MCF 10A (cell line): ENCODE measurements at regions of chr11 and their contacts with region 1.

Region 1: DNA sequence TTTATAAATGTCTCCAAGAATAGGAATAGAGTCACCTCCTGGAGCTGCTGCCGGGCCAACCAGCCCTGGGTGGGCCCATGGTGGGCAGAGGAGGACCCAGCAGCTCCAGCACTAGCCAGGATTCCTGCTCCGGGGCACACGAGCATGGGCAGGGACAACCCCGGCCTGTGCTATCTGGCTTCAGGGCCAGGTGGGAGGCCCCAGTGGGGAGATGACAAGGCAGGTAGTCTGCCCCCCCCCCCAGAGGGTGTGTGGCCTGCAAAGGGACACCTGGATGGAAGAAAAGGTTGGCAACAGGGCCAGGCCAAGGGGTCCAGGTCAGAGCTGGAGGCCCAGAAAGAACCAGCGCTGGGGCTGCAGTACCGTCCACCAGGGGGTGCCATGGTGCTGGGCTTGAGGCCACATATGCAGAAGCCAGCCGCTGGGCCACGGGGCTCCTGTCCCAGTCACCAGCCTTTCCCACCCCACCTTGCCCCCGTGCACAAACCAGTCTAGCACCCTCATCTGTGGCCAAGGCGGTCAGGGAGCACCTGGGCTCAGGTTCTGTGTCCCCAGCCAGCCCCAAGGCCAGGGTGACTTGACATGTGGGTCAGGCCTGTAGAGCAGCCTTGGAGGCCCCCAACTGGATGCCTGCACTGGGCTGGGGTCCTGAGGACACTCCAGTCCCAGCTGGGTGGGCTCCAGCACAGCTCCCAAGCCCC is 3.5 kb downstream of the TSPAN32 start:
- DNase-seq: peak; percentile 67
- H3K4me3 Mint-ChIP-seq: no peak overlapping the region
- H3K27ac Mint-ChIP-seq: no peak overlapping the region
- H3K4me1 Mint-ChIP-seq: peaks cover 7% of the 10 kb centered on the region
- H3K27me3 Mint-ChIP-seq: no peaks in the 10 kb centered on the region
- CTCF ChIP-seq: peak; percentile 77

Region 2: DNA sequence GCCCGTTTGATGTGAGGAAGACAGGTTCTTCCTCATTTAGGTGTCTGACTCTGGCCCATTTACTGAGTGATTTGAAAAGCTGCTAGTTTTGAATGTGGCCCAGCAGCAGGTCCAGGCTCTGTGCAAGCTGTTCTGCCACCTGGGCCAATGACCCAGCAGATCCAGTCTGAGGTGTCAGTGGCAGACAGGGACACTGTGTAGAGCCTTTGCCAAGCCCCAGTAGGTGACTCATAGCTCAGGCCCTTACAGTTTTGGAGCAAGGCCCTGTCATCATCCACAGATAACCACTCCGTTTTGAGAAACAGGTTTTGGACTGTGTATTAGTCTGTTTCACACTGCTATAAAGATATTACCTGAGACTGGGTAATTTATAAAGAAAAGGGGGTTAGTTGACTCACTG is 20.4 kb after region 1 on chr11:
- CTCF ChIA-PET with region 1: interaction called, 13 read pairs
- POLR2A ChIA-PET with region 1: no interaction called
- intact Hi-C with region 1: no loop called
- DNase-seq: peak; percentile 30
- H3K4me3 Mint-ChIP-seq: no peak overlapping the region
- H3K27ac Mint-ChIP-seq: peak overlapping the region; percentile 35
- H3K4me1 Mint-ChIP-seq: peaks cover 7% of the 10 kb centered on the region
- H3K27me3 Mint-ChIP-seq: no peaks in the 10 kb centered on the region
- CTCF ChIP-seq: no peak

Region 3: GRCh38 chr11:2400069-2400760 is 94.9 kb after region 1 on chr11 and contains the start of gene TSSC4:
- CTCF ChIA-PET with region 1: interaction called, 10 read pairs
- POLR2A ChIA-PET with region 1: interaction called, 7 read pairs
- intact Hi-C with region 1: loop called (anchors 1 kb)
- DNase-seq: peak; percentile 100
- H3K4me3 Mint-ChIP-seq: peak within 1 kb of the TSS; percentile 86
- H3K27ac Mint-ChIP-seq: peak within 1 kb of the TSS; percentile 94
- H3K4me1 Mint-ChIP-seq: no peaks in the 10 kb centered on the region
- H3K27me3 Mint-ChIP-seq: no peaks in the 10 kb centered on the region
- CTCF ChIP-seq: peak; percentile 95
- total RNA-seq, gene TSSC4: 69.9 and 70.3 TPM in 2 replicates

Region 4: DNA sequence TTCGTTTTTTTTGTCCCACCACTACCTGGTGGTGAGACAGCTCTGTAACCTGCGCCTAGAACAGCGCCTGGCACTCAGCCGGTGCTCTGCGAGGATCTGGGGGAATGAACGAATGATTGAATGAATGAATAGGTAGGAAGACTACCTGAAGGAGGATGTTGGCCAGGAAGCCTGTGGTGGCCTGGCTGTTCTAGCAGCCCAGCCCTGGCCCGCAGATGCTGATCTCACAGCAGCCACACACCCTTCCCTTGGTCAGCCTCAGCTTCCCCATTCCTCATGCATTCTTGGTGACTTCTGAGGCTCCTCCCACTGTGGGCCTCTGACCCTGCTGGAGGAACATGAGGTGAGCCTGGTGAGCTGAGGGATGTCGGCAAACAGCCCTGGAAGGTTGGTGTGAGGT is 135.4 kb after region 1 on chr11:
- CTCF ChIA-PET with region 1: no interaction called
- POLR2A ChIA-PET with region 1: no interaction called
- intact Hi-C with region 1: no loop called
- DNase-seq: no peak
- H3K4me3 Mint-ChIP-seq: no peak overlapping the region
- H3K27ac Mint-ChIP-seq: no peak overlapping the region
- H3K4me1 Mint-ChIP-seq: no peaks in the 10 kb centered on the region
- H3K27me3 Mint-ChIP-seq: peaks cover 26% of the 10 kb centered on the region
- CTCF ChIP-seq: no peak

Region 5: DNA sequence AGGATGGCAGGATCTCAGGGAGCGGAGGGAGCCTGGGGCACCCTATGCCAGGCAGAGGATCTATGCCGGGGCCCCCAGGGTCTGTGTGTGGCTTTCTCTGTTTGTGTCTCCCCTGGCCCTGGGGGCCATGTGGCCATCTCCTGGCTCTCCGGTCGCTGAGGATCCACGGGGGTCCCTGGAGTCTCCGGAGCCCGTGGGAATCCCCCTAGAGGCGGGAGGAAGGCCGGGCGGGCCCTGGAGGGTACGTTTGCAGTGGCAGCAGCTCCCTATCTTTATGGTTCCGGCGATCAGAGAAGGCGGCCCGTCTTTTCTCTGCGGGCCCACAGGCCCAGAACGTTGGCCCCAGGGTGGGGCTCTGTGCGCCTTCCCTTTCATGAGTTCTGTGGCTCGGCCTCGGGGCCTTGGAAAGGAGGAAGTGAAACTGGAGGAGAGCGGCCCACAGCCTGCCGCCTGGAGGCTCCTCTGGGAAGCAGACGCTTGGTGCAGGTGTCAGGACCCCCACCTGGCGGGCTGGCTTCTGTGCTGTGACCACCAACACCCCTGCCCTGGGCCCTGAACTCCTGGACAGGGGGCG is 221.6 kb after region 1 on chr11:
- CTCF ChIA-PET with region 1: interaction called, 29 read pairs
- POLR2A ChIA-PET with region 1: no interaction called
- intact Hi-C with region 1: no loop called
- DNase-seq: no peak
- H3K4me3 Mint-ChIP-seq: no peak overlapping the region
- H3K27ac Mint-ChIP-seq: no peak overlapping the region
- H3K4me1 Mint-ChIP-seq: peaks cover 6% of the 10 kb centered on the region
- H3K27me3 Mint-ChIP-seq: peaks cover 17% of the 10 kb centered on the region
- CTCF ChIP-seq: no peak

Region 6: GRCh38 chr11:3341298-3341697 is 1036.0 kb after region 1 on chr11:
- CTCF ChIA-PET with region 1: no interaction called
- POLR2A ChIA-PET with region 1: no interaction called
- intact Hi-C with region 1: no loop called
- DNase-seq: peak; percentile 72
- H3K4me3 Mint-ChIP-seq: no peak overlapping the region
- H3K27ac Mint-ChIP-seq: no peak overlapping the region
- H3K4me1 Mint-ChIP-seq: peaks cover 18% of the 10 kb centered on the region
- H3K27me3 Mint-ChIP-seq: peaks cover 49% of the 10 kb centered on the region
- CTCF ChIP-seq: peak; percentile 46